ENCODE measurements at regions of chr10 and their contacts with region 1.

Region 1: DNA sequence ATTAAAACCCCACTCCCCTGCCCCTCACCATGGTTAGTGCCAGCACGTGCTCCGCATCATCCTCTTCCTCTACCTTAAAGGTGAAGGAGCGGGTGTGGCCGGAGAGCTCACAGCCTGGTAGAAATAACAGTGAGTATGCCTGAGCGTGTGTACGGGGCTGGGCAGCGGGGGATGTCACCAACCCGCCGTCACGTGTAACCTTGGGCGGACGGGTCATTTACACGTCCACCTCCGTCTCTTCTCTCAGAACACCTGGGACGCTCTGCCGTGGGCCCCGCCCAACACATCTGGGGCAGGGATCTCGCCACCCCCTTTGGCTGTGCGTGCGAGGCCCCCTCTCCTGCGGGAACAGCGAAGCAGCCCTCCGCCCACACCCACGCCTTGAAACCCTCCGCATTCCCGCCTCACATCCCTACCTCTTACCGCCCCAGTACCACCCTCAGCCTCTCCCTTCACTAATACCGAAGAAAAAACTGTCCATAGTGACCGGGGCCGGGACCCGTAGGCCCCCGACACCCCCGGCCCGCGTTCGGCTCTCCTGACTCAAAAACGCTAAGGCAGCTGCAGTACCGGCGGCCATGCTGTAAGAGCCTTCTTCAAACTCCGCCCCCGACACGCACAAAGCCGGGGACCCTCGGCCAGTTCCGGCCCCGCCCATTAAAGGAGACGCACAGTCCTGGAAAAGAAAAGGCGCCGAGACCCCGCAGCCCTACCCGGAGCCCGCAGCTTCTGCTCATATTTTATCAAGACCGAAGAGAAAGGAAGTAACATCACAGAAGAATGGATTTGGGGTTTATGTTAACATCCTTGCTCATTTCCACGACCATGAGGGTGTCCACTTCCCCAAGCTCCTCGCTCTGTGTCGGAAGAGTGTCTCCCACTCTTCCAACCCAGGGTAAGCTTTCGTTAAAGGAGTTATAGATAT is at the start of gene NPM3:
- DNase-seq: peak; percentile 94
- H3K4me3 ChIP-seq: peak within 1 kb of the TSS; percentile 77 to 96
- H3K27ac ChIP-seq: peak within 1 kb of the TSS; percentile 70 to 72
- H3K4me1 ChIP-seq: peaks cover 8 to 23% of the 10 kb centered on the region in 2 experiments; a peak in 3 of 4 replicates
- H3K27me3 ChIP-seq: no peaks in the 10 kb centered on the region
- CTCF ChIP-seq: no peak
- EP300 ChIP-seq: no peak
- RAD21 ChIP-seq: no peak
- polyA plus RNA-seq, gene NPM3: 89.3 and 105 TPM in 2 replicates

Region 2: DNA sequence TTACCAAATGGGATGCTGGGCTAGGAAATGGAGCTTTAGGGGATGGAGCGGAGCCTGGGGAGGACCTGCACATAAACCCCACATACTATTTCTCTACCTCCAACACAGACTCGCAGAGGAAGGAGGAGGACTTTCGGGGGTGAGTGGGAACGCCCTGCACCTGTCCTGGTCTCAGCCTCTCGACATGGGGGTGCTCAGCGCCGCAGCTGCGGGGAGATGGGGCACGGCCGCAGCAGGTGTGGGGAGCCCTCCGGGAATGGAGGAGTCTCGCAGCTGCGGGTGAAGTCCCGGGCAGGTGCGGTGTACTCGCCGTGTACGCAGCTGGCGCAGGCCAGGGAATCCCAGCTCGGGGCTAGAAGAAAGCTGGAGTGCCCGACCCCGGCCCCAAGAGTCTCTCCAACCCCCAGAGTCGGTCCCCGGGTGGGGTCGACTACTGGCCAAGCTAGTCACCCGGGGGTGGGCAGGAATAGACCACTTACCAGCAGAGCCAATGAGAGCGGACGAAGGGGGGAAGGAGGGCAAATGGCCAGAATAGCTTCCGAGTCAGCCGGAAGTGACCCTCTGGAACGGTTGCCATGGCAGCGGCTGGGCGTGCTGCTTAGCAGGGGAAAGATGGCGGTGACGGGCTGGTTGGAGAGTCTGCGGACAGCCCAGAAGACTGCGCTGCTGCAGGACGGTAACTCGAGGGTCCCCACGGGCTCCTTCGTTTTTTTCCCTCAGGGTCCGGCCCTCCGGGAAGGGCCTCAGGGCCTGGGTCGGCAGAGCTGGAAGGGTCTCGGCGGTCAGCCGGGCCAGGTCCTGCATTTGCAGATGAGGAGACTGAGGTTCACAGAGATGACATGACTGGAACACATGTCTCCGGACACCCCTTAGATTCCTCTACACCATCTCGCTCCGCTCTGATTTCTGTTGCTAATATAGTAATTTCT is 195.1 kb before region 1 on chr10 and contains the starts of genes DPCD and POLL:
- CTCF ChIA-PET with region 1: interaction called, 20 read pairs
- POLR2A ChIA-PET with region 1: no interaction called
- DNase-seq: peak; percentile 97
- H3K4me3 ChIP-seq: peak within 1 kb of the TSS; percentile 92 to 94
- H3K27ac ChIP-seq: peak within 1 kb of the TSS; percentile 17 to 76; a peak in 2 of 4 replicates
- H3K4me1 ChIP-seq: peaks cover 13 to 26% of the 10 kb centered on the region in 2 experiments; a peak in 2 of 4 replicates
- H3K27me3 ChIP-seq: no peaks in the 10 kb centered on the region
- CTCF ChIP-seq: no peak
- EP300 ChIP-seq: no peak
- RAD21 ChIP-seq: no peak
- polyA plus RNA-seq, gene DPCD: 106 and 121 TPM in 2 replicates
- polyA plus RNA-seq, gene POLL: 22.0 and 27.3 TPM in 2 replicates

Region 3: GRCh38 chr10:101617102-101617823 is 165.8 kb before region 1 on chr10:
- CTCF ChIA-PET with region 1: interaction called, 297 read pairs
- POLR2A ChIA-PET with region 1: no interaction called
- DNase-seq: peak; percentile 52
- H3K4me3 ChIP-seq: no peak overlapping the region
- H3K27ac ChIP-seq: peak overlapping the region in 1 of 2 experiments; percentile 76; a peak in 2 of 4 replicates
- H3K4me1 ChIP-seq: peaks cover 0 to 54% of the 10 kb centered on the region in 2 experiments; a peak in 2 of 4 replicates
- H3K27me3 ChIP-seq: no peaks in the 10 kb centered on the region
- CTCF ChIP-seq: no peak
- EP300 ChIP-seq: no peak
- RAD21 ChIP-seq: no peak

Region 4: DNA sequence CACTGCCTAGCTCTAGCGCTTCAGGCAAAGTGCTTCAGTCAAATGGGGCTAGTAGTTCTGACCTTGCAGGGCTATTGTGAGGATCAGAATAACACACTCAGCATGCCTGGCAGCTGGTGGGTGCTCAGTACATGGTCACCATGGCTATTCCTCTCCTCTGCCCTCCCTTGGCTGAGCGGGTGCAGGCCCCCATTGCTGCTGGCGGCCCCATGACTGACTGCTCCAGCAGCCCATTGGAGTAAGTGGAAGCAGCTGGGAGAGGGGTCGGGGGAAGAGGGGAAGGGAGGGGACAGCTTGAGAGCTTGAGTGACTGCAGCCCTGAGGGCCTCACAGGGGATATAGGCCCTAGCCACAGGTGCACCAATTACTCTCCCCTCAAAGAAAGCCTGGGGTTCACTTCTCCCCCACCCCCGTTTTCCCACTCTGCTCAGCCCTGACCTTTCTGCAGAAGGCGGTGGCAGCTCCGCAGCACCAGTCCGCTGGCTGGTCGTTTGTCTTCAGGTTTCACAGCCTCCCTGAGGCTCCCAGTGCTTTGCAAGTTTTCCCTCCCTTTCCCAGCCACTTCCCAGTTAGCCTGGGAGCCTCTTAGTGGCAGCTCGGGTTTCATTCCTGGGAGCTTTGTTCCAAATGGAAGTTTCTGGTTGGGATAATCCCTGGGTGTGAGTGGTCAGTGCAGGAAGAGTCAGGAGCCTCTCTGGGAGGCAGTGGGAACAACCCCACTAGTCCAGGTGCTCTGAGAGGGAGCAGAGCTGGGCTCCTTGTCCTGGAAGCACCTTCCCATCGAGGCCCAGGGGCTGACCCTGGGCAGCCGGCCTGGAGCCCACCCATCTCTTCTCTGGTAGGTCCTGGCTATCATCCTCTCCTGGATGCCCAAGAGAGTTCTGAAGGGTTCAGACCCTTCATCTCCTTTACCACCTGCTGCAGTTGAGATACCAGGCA is 23.5 kb before region 1 on chr10:
- CTCF ChIA-PET with region 1: interaction called, 12 read pairs
- POLR2A ChIA-PET with region 1: no interaction called
- DNase-seq: peak; percentile 35
- H3K4me3 ChIP-seq: no peak overlapping the region
- H3K27ac ChIP-seq: no peak overlapping the region
- H3K4me1 ChIP-seq: no peaks in the 10 kb centered on the region; a peak in 1 of 4 replicates
- H3K27me3 ChIP-seq: peaks cover 2% of the 10 kb centered on the region; the same call in 1 of the 2 replicates
- CTCF ChIP-seq: no peak
- EP300 ChIP-seq: no peak
- RAD21 ChIP-seq: no peak

Region 5: DNA sequence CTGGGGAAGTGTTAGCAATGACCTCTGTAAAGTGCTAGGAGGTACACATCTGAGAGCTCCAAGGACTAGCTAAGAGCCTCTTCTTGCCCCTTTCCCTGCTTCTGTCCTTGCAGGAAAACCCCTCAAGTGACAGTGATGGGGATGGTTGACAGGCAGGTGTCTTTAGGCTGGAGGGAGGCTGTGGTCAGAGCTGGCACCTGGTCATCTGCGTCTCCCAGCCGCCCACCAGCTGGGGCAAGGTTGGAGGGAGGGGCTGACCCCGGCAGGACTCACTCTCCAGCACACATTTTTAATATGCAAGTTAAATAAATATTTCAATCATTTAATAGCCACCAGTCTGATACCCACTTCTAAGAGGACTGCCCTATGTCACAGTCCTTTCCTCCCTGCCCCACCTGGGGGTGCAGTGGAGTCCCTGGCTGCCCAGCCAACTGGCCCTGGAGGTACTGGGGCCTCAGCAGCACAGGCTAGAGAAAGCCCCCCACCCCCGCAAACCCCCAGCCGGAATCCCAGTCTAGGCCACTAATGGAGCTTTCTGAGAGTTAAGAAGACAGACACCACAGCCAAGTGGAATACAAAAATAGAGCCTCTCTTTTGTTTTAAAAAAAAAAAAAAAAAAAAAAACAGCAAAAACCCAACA is 13.4 kb before region 1 on chr10:
- CTCF ChIA-PET with region 1: interaction called, 35 read pairs
- POLR2A ChIA-PET with region 1: no interaction called
- DNase-seq: peak; percentile 45
- H3K4me3 ChIP-seq: no peak overlapping the region
- H3K27ac ChIP-seq: no peak overlapping the region
- H3K4me1 ChIP-seq: no peaks in the 10 kb centered on the region
- H3K27me3 ChIP-seq: peaks cover 3% of the 10 kb centered on the region; the same call in 1 of the 2 replicates
- CTCF ChIP-seq: no peak
- EP300 ChIP-seq: no peak
- RAD21 ChIP-seq: no peak

Region 6: DNA sequence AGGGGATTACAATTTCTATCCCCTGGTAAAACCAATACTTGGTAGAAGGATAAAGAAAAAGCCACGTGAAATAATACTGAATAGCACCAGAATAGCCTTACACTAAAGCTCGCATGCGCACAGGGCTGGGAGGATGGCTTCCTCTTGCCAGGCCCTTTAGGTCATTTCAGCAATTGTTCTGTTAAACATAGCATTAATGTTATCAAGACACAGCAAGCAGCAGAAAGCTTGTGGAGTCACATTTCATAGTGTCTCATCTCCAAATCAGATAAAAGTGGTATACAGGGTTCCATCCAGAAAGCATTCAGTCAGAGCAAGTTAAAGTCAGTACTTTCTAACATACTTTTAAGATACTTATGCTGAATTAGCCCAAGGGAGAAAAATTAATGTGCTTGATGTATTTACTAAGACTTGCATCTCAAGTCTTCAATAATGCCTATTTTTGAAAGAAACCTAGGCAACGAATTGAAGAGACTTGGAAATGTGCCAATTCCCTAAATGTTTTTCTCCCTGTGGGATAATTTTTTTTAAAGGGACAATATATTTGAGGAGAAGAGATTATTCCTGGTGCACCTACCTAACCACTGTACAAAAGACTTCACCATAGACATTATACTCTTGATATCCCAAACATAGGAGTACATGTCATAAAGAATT is 14.5 kb after region 1 on chr10:
- CTCF ChIA-PET with region 1: interaction called, 47 read pairs
- POLR2A ChIA-PET with region 1: no interaction called
- DNase-seq: no peak
- H3K4me3 ChIP-seq: no peak overlapping the region
- H3K27ac ChIP-seq: peak overlapping the region; percentile 7 to 24; a peak in 2 of 4 replicates
- H3K4me1 ChIP-seq: peaks cover 0 to 2% of the 10 kb centered on the region in 2 experiments; a peak in 1 of 4 replicates
- H3K27me3 ChIP-seq: no peaks in the 10 kb centered on the region
- CTCF ChIP-seq: no peak
- EP300 ChIP-seq: no peak
- RAD21 ChIP-seq: no peak

Region 7: DNA sequence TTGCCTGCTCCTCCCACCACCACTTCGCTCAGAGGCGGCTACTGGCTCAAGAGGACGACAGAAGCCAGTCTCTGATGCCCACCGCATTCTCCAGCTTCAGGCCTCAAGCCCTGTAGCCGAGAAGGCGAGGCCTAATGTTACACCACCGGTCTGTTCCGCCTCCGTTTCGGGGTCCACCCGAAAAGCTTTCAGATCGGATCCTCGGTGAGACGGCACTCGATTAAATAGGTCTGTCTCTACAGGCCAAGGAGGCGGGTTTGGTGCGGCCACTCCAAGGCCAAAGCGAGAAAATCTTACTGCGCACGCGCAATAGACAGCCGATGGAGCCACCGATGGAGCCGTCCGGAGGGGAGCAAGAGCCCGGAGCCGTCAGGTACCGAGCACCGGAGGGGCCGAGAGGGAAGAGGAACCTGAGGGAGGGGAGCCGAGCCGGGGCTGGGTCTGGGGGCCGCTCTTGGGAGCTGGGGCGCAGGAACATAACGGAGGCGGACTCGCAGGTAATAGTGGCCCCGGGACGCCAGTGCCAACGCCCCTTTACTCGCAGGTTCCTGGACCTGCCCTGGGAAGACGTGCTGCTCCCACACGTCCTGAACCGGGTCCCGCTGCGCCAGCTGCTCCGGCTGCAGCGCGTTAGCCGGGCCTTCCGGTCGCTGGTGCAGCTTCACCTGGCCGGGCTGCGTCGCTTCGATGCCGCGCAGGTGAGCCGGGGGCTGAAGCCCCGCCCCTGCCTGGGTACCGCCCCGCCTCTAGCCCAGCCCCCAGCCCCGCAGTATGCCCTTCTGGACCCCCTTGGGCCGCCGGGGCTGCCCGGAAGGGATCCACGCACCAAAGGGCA is 638.0 kb after region 1 on chr10 and contains the start of gene FBXL15:
- CTCF ChIA-PET with region 1: no interaction called
- POLR2A ChIA-PET with region 1: no interaction called
- DNase-seq: peak; percentile 91
- H3K4me3 ChIP-seq: peak within 1 kb of the TSS; percentile 77 to 90
- H3K27ac ChIP-seq: peak within 1 kb of the TSS; percentile 78 to 99
- H3K4me1 ChIP-seq: peaks cover 0 to 29% of the 10 kb centered on the region in 2 experiments; a peak in 2 of 4 replicates
- H3K27me3 ChIP-seq: no peaks in the 10 kb centered on the region
- CTCF ChIP-seq: no peak
- EP300 ChIP-seq: no peak
- RAD21 ChIP-seq: no peak
- polyA plus RNA-seq, gene FBXL15: 11.7 and 17.2 TPM in 2 replicates

Measured in SK-N-SH (cell line).